ENCODE measurements at regions of chr11 and their contacts with region 1.

Region 1: GRCh38 chr11:58923300-58923788 is 15.9 kb upstream of the GLYATL1 start:
- DNase-seq: peak in 3 of 14 experiments; percentile 12 to 29 (median 25)
- ATAC-seq: peak; percentile 40
- H3K4me3 ChIP-seq: no peak overlapping the region
- H3K4me3 Mint-ChIP-seq: no peak overlapping the region
- H3K27ac ChIP-seq: no peak overlapping the region
- H3K27ac Mint-ChIP-seq: no peak overlapping the region
- H3K4me1 ChIP-seq: peaks cover 8% of the 10 kb centered on the region
- H3K4me1 Mint-ChIP-seq: peaks cover 27% of the 10 kb centered on the region
- H3K27me3 ChIP-seq: peaks cover 0 to 4% of the 10 kb centered on the region in 2 experiments
- H3K27me3 Mint-ChIP-seq: no peaks in the 10 kb centered on the region
- CTCF ChIP-seq: peak; percentile 43

Region 2: GRCh38 chr11:58654079-58654907 is 269.1 kb before region 1 on chr11:
- CTCF ChIA-PET with region 1: no interaction called
- POLR2A ChIA-PET with region 1: no interaction called
- intact Hi-C with region 1: loop called in 1 of 2 experiments (anchors 10 kb)
- DNase-seq: peak; percentile 64 to 86 (median 70)
- ATAC-seq: peak; percentile 99
- H3K4me3 ChIP-seq: no peak overlapping the region
- H3K4me3 Mint-ChIP-seq: no peak overlapping the region
- H3K27ac ChIP-seq: no peak overlapping the region
- H3K27ac Mint-ChIP-seq: no peak overlapping the region
- H3K4me1 ChIP-seq: peaks cover 3% of the 10 kb centered on the region
- H3K4me1 Mint-ChIP-seq: peaks cover 7% of the 10 kb centered on the region
- H3K27me3 ChIP-seq: no peaks in the 10 kb centered on the region
- H3K27me3 Mint-ChIP-seq: no peaks in the 10 kb centered on the region
- CTCF ChIP-seq: peak; percentile 96

Region 3: GRCh38 chr11:58912124-58912523 is 11.2 kb before region 1 on chr11:
- CTCF ChIA-PET with region 1: no interaction called
- POLR2A ChIA-PET with region 1: no interaction called
- intact Hi-C with region 1: no loop called
- DNase-seq: no peak
- ATAC-seq: no peak
- H3K4me3 ChIP-seq: no peak overlapping the region
- H3K4me3 Mint-ChIP-seq: no peak overlapping the region
- H3K27ac ChIP-seq: no peak overlapping the region
- H3K27ac Mint-ChIP-seq: no peak overlapping the region
- H3K4me1 ChIP-seq: no peaks in the 10 kb centered on the region
- H3K4me1 Mint-ChIP-seq: no peaks in the 10 kb centered on the region
- H3K27me3 ChIP-seq: peaks cover 4 to 19% of the 10 kb centered on the region in 2 experiments
- H3K27me3 Mint-ChIP-seq: peaks cover 54% of the 10 kb centered on the region
- CTCF ChIP-seq: no peak

Measured in CD4-positive, alpha-beta T cell (primary cell).